A549 (cell line): ENCODE measurements at regions of chr17 and their contacts with region 1.

Region 1: GRCh38 chr17:50547035-50547735 is at the start of gene SPATA20:
- DNase-seq: peak; percentile 89 to 93
- ATAC-seq: peak; percentile 72 to 84
- H3K4me3 ChIP-seq: peak within 1 kb of the TSS; percentile 67
- H3K27ac ChIP-seq: peak within 1 kb of the TSS; percentile 95 to 98
- H3K4me1 ChIP-seq: peaks cover 50% of the 10 kb centered on the region
- CTCF ChIP-seq: peak; percentile 99
- EP300 ChIP-seq: no peak
- POLR2A ChIP-seq: peak; percentile 83
- RAD21 ChIP-seq: peak; percentile 99 to 100
- polyA plus RNA-seq, gene SPATA20: 34.4 and 48.5 TPM in 2 replicates

Region 2: GRCh38 chr17:49703557-49704277 is 843.5 kb before region 1 on chr17:
- CTCF ChIA-PET with region 1: no interaction called
- POLR2A ChIA-PET with region 1: no interaction called
- DNase-seq: peak; percentile 72 to 78
- ATAC-seq: peak; percentile 52 to 53
- H3K4me3 ChIP-seq: no peak overlapping the region
- H3K27ac ChIP-seq: no peak overlapping the region
- H3K4me1 ChIP-seq: peaks cover 10% of the 10 kb centered on the region
- CTCF ChIP-seq: peak; percentile 57
- EP300 ChIP-seq: no peak
- POLR2A ChIP-seq: no peak
- RAD21 ChIP-seq: peak; percentile 55 to 67

Region 3: GRCh38 chr17:50514946-50515702 is 32.1 kb before region 1 on chr17:
- CTCF ChIA-PET with region 1: interaction called, 11 read pairs
- POLR2A ChIA-PET with region 1: no interaction called
- DNase-seq: no peak
- ATAC-seq: no peak
- H3K4me3 ChIP-seq: no peak overlapping the region
- H3K27ac ChIP-seq: 0 out of 6 replicates have a peak overlapping the region, but pooled peaks of 1 of the 2 experiments have one; percentile 19
- H3K4me1 ChIP-seq: peaks cover 12% of the 10 kb centered on the region; the same call in 1 of the 3 replicates
- CTCF ChIP-seq: no peak
- EP300 ChIP-seq: no peak
- POLR2A ChIP-seq: no peak
- RAD21 ChIP-seq: no peak

Region 4: DNA sequence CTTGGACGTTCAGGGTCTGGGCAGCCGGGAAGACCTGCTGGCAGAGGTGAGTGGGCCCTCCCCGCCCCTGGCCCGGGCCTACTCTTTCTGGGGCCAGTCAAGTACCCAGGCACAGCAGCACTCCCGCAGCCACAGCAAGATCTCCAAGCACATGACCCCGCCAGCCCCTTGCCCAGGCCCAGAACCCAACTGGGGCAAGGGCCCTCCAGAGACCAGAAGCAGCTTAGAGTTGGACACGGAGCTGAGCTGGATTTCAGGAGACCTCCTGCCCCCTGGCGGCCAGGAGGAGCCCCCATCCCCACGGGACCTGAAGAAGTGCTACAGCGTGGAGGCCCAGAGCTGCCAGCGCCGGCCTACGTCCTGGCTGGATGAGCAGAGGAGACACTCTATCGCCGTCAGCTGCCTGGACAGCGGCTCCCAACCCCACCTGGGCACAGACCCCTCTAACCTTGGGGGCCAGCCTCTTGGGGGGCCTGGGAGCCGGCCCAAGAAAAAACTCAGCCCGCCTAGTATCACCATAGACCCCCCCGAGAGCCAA is 78.9 kb after region 1 on chr17:
- CTCF ChIA-PET with region 1: interaction called, 406 read pairs
- POLR2A ChIA-PET with region 1: interaction called, 8 read pairs
- DNase-seq: peak; percentile 88
- ATAC-seq: peak; percentile 66 to 84
- H3K4me3 ChIP-seq: no peak overlapping the region
- H3K27ac ChIP-seq: peak overlapping the region; percentile 71 to 83
- H3K4me1 ChIP-seq: peaks cover 54% of the 10 kb centered on the region
- CTCF ChIP-seq: peak; percentile 76
- EP300 ChIP-seq: no peak
- POLR2A ChIP-seq: no peak
- RAD21 ChIP-seq: peak; percentile 82 to 88

Region 5: GRCh38 chr17:50668025-50668837 is 121.0 kb after region 1 on chr17:
- CTCF ChIA-PET with region 1: interaction called, 48 read pairs
- POLR2A ChIA-PET with region 1: interaction called, 7 read pairs
- DNase-seq: peak; percentile 71 to 73
- ATAC-seq: peak; percentile 58 to 62
- H3K4me3 ChIP-seq: 0 out of 3 replicates have a peak overlapping the region, but pooled peaks have one; percentile 0
- H3K27ac ChIP-seq: peak overlapping the region; percentile 98
- H3K4me1 ChIP-seq: peaks cover 100% of the 10 kb centered on the region
- CTCF ChIP-seq: no peak
- EP300 ChIP-seq: peak; percentile 60 to 64; a peak in 2 of 5 replicates
- POLR2A ChIP-seq: no peak
- RAD21 ChIP-seq: 0 out of 5 replicates have a peak, but pooled peaks of 1 of the 2 experiments have one; percentile 27

Region 6: DNA sequence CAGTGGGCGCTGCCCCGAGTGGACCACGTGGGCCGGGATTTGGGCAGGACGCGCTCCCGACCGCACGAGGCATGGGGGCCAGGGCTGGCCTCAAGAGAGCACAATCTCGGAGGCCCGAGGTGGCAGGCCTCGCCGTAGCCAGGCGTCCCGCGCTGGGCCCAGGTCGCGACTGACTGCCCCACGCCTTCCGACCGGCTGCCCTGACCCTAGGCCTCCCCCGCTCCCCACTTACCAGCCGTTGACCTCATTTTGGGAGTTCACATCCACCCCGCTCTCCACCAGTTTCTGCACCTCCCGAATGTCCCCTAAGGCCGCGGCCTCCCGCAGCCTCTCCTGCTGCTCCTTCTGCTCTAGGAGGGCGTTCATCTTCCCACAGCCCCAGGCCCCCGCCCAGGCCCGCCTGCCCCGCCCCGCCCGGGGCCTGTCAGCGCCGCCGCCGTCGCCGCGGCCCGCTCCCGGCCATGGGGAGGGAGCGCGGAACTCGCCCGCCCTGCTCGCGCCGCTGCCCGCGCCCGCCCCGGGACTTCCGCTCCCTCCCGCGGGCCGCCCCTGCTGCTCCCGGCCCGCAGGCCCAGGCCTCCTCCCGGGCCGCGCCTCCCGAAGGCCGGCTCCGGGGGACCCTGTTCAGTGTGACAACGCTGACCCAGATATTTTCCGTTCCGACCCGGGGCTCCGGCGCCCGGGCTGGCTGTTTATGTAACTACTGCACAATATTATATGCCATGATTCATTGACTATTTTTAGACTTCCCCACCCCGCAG is 160.3 kb after region 1 on chr17 and contains the start of gene ANKRD40:
- CTCF ChIA-PET with region 1: interaction called, 753 read pairs
- POLR2A ChIA-PET with region 1: interaction called, 14 read pairs
- DNase-seq: peak; percentile 96
- ATAC-seq: peak; percentile 81 to 88
- H3K4me3 ChIP-seq: peak within 1 kb of the TSS; percentile 65
- H3K27ac ChIP-seq: peak within 1 kb of the TSS; percentile 96 to 98
- H3K4me1 ChIP-seq: peaks cover 38% of the 10 kb centered on the region
- CTCF ChIP-seq: no peak
- EP300 ChIP-seq: peak; percentile 17 to 36; a peak in 1 of 5 replicates
- POLR2A ChIP-seq: peak; percentile 50
- RAD21 ChIP-seq: no peak
- polyA plus RNA-seq, gene ANKRD40: 68.5 and 84.3 TPM in 2 replicates

Region 7: GRCh38 chr17:50853015-50853615 is 305.9 kb after region 1 on chr17:
- CTCF ChIA-PET with region 1: interaction called, 22 read pairs
- POLR2A ChIA-PET with region 1: no interaction called
- DNase-seq: no peak
- ATAC-seq: no peak
- H3K4me3 ChIP-seq: no peak overlapping the region
- H3K27ac ChIP-seq: peak overlapping the region in 1 of 2 experiments; percentile 80; a peak in 2 of 6 replicates
- H3K4me1 ChIP-seq: peaks cover 25% of the 10 kb centered on the region
- CTCF ChIP-seq: no peak
- EP300 ChIP-seq: no peak
- POLR2A ChIP-seq: no peak
- RAD21 ChIP-seq: no peak